Right cardiac atrium (tissue), 5 donors: ENCODE measurements at regions of chr15 and their contacts with region 1.

Region 1: DNA sequence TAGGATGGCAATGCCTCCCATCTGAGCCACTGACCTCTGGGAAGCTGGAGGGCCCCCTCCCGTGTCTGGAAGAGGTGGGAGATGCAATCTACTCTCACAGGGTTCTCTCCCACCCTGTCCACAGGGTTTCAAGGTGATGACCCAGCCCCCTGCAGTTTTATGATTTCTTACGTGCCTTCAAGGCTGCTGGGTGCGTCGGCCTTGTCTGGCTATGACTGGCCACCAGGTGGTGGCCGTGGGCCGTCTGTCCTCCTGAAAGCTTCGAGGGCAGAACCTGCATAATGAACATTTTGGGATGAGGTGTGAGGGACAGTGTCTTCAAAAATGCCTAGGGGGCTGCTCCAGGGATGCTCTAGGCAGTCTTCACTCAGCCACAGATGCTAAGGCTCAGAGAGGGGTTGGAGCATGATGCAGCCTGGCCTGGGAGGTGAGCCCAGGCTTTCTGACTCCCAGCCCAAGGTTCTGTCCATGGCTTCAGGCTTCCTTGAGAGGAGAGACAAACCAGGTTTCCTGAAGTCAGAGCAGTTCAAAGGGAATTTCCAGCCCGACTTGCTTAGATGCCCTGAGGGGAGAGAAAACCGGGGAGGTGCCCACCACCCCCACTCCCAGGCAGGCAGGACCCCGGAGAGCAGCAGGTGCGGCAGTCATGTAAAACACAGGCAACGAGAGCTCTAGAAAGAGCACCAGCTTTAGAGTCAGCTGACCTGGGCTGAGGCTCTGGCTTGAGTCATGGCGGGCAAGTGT is 18.7 kb downstream of the ISG20 start:
- DNase-seq: no peak
- ATAC-seq: peak; percentile 37 to 63
- H3K4me3 ChIP-seq: no peak overlapping the region
- H3K27ac ChIP-seq: no peak overlapping the region
- H3K4me1 ChIP-seq: no peaks in the 10 kb centered on the region
- H3K27me3 ChIP-seq: no peaks in the 10 kb centered on the region

Region 2: GRCh38 chr15:88725305-88726210 is 68.1 kb after region 1 on chr15:
- intact Hi-C with region 1: no loop called
- DNase-seq: no peak
- ATAC-seq: no peak
- H3K4me3 ChIP-seq: no peak overlapping the region
- H3K27ac ChIP-seq: no peak overlapping the region
- H3K4me1 ChIP-seq: no peaks in the 10 kb centered on the region
- H3K27me3 ChIP-seq: no peaks in the 10 kb centered on the region

Region 3: DNA sequence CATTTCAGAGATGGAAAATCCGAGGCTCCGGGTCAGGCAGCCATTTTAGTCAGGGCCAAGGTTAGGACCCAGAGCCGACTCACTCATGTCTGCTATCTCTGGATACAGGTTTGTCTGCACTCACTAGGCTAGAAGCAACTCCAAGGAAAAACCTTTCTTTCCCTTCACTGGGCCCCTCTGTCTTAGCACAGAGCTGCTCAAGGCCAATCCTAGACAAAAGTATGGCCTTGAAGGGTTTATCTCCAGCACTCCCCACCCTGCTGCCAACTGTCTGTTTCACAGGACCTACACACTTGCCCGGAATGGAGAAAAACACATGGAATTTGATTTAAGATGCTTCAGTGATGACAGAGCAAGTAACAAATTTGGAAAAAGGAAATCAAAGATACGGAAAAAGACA is 171.3 kb after region 1 on chr15:
- intact Hi-C with region 1: loop called in 2 of 4 experiments (anchors 10 kb)
- DNase-seq: no peak
- ATAC-seq: no peak
- H3K4me3 ChIP-seq: no peak overlapping the region
- H3K27ac ChIP-seq: no peak overlapping the region
- H3K4me1 ChIP-seq: no peaks in the 10 kb centered on the region
- H3K27me3 ChIP-seq: no peaks in the 10 kb centered on the region

Region 4: GRCh38 chr15:88834211-88834812 is 176.8 kb after region 1 on chr15:
- intact Hi-C with region 1: loop called (anchors 1 to 10 kb)
- DNase-seq: peak; percentile 67 to 83 (median 83)
- ATAC-seq: peak; percentile 77 to 81
- H3K4me3 ChIP-seq: no peak overlapping the region
- H3K27ac ChIP-seq: no peak overlapping the region
- H3K4me1 ChIP-seq: no peaks in the 10 kb centered on the region
- H3K27me3 ChIP-seq: no peaks in the 10 kb centered on the region